CD4-positive, alpha-beta T cell (primary cell): ENCODE measurements at regions of chr11 and their contacts with region 1.

Region 1: GRCh38 chr11:123110356-123110755 is 48.4 kb upstream of the HSPA8 start:
- DNase-seq: peak in 2 of 14 experiments; percentile 15 to 35
- ATAC-seq: no peak
- H3K4me3 ChIP-seq: no peak overlapping the region
- H3K4me3 Mint-ChIP-seq: peak overlapping the region; percentile 14
- H3K27ac ChIP-seq: no peak overlapping the region
- H3K27ac Mint-ChIP-seq: no peak overlapping the region
- H3K4me1 ChIP-seq: no peaks in the 10 kb centered on the region
- H3K4me1 Mint-ChIP-seq: no peaks in the 10 kb centered on the region
- H3K27me3 ChIP-seq: no peaks in the 10 kb centered on the region
- H3K27me3 Mint-ChIP-seq: no peaks in the 10 kb centered on the region
- CTCF ChIP-seq: no peak

Region 2: DNA sequence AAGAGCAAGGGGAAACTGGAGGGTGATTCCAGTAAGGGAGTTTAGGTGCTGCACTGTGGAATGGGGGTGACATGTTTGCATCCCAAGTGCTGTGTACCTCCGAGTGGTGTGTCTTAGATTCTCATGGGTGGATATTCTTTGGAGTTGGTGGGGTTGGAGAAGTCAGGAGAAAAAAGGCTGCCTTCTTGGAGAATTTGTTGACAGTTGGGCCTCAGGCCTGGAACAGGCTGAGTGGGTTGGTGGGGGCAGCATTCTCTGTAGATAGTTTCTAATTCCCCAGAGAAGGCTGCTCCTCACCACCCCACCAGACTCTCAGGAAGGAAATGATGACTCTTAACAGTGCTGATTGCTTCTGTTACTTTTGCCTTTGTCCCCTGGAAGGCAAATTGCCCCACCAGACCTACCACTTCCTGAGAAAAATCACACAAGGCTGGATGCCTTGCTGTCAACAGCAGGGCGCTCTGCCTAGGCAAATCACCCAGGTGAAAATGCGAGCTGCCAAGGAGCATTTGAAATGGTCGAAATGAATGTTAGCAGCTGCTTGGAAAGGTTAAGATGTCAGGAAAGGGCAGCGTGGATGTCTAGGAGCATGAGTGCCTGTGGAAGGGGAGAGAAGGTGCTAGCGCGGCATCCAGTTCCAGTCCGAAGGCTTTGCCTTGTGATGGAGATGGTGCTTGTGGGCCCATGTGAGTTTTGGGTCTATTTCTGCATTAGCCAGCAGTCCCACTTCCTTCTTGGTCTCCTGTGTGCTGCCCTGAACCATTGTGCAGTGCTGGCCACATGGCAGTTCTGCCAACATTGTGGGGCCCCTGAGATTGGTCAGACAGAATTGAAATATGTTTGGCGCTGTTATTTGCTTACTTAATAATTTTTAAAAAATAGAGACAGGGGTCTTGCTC is 1627.9 kb before region 1 on chr11:
- CTCF ChIA-PET with region 1: no interaction called
- POLR2A ChIA-PET with region 1: no interaction called
- intact Hi-C with region 1: no loop called
- DNase-seq: peak; percentile 29 to 89 (median 60)
- ATAC-seq: peak; percentile 80
- H3K4me3 ChIP-seq: peak overlapping the region; percentile 27
- H3K4me3 Mint-ChIP-seq: peak overlapping the region; percentile 75
- H3K27ac ChIP-seq: peak overlapping the region; percentile 69 to 71
- H3K27ac Mint-ChIP-seq: peak overlapping the region; percentile 89
- H3K4me1 ChIP-seq: peaks cover 65% of the 10 kb centered on the region
- H3K4me1 Mint-ChIP-seq: peaks cover 71% of the 10 kb centered on the region
- H3K27me3 ChIP-seq: no peaks in the 10 kb centered on the region
- H3K27me3 Mint-ChIP-seq: no peaks in the 10 kb centered on the region
- CTCF ChIP-seq: no peak

Region 3: GRCh38 chr11:122882857-122883645 is 227.3 kb before region 1 on chr11:
- CTCF ChIA-PET with region 1: no interaction called
- POLR2A ChIA-PET with region 1: no interaction called
- intact Hi-C with region 1: loop called in 1 of 2 experiments (anchors 10 kb)
- DNase-seq: peak; percentile 5 to 76 (median 48)
- ATAC-seq: peak; percentile 81
- H3K4me3 ChIP-seq: peak overlapping the region; percentile 78
- H3K4me3 Mint-ChIP-seq: peak overlapping the region; percentile 89
- H3K27ac ChIP-seq: peak overlapping the region; percentile 42 to 83
- H3K27ac Mint-ChIP-seq: peak overlapping the region; percentile 75
- H3K4me1 ChIP-seq: peaks cover 17% of the 10 kb centered on the region
- H3K4me1 Mint-ChIP-seq: peaks cover 38% of the 10 kb centered on the region
- H3K27me3 ChIP-seq: no peaks in the 10 kb centered on the region
- H3K27me3 Mint-ChIP-seq: no peaks in the 10 kb centered on the region
- CTCF ChIP-seq: no peak

Region 4: GRCh38 chr11:123246749-123247495 is 136.6 kb after region 1 on chr11:
- CTCF ChIA-PET with region 1: interaction called, 12 read pairs
- POLR2A ChIA-PET with region 1: interaction called, 10 read pairs
- intact Hi-C with region 1: loop called (anchors 1 kb)
- DNase-seq: peak; percentile 70 to 89 (median 79)
- ATAC-seq: peak; percentile 92
- H3K4me3 ChIP-seq: no peak overlapping the region
- H3K4me3 Mint-ChIP-seq: no peak overlapping the region
- H3K27ac ChIP-seq: no peak overlapping the region
- H3K27ac Mint-ChIP-seq: no peak overlapping the region
- H3K4me1 ChIP-seq: peaks cover 7% of the 10 kb centered on the region
- H3K4me1 Mint-ChIP-seq: no peaks in the 10 kb centered on the region
- H3K27me3 ChIP-seq: no peaks in the 10 kb centered on the region
- H3K27me3 Mint-ChIP-seq: no peaks in the 10 kb centered on the region
- CTCF ChIP-seq: peak; percentile 95

Region 5: DNA sequence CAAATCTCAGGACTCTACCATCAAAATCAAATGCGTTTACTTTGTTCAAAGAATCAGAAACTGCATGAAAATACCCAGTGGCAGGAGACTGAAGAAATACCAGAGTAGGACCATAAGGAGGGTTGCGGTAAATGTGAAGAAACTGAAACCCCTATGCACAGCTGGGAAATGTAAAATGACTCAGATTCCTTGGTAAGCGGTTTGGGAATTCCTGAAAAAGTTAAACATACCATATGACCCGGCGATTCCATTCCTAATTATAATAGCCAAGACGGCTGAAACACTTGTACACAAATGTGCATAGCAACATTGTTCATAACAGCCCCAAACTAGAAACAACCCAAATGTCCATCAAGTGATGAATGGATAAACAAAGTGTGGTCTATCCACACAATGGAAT is 205.6 kb after region 1 on chr11:
- CTCF ChIA-PET with region 1: no interaction called
- POLR2A ChIA-PET with region 1: no interaction called
- intact Hi-C with region 1: no loop called
- DNase-seq: no peak
- ATAC-seq: no peak
- H3K4me3 ChIP-seq: no peak overlapping the region
- H3K4me3 Mint-ChIP-seq: no peak overlapping the region
- H3K27ac ChIP-seq: no peak overlapping the region
- H3K27ac Mint-ChIP-seq: no peak overlapping the region
- H3K4me1 ChIP-seq: no peaks in the 10 kb centered on the region
- H3K4me1 Mint-ChIP-seq: no peaks in the 10 kb centered on the region
- H3K27me3 ChIP-seq: no peaks in the 10 kb centered on the region
- H3K27me3 Mint-ChIP-seq: no peaks in the 10 kb centered on the region
- CTCF ChIP-seq: no peak

Region 6: GRCh38 chr11:123478352-123478987 is 368.1 kb after region 1 on chr11:
- CTCF ChIA-PET with region 1: no interaction called
- POLR2A ChIA-PET with region 1: no interaction called
- intact Hi-C with region 1: loop called (anchors 5 kb)
- DNase-seq: peak in 9 of 14 experiments; percentile 4 to 78 (median 30)
- ATAC-seq: peak; percentile 26
- H3K4me3 ChIP-seq: peak overlapping the region; percentile 16
- H3K4me3 Mint-ChIP-seq: no peak overlapping the region
- H3K27ac ChIP-seq: no peak overlapping the region
- H3K27ac Mint-ChIP-seq: no peak overlapping the region
- H3K4me1 ChIP-seq: peaks cover 11% of the 10 kb centered on the region
- H3K4me1 Mint-ChIP-seq: no peaks in the 10 kb centered on the region
- H3K27me3 ChIP-seq: no peaks in the 10 kb centered on the region
- H3K27me3 Mint-ChIP-seq: no peaks in the 10 kb centered on the region
- CTCF ChIP-seq: peak; percentile 88